ENCODE measurements at regions of chr2 and their contacts with region 1.

Region 1: GRCh38 chr2:218659258-218659987 is at the starts of genes BCS1L and ZNF142:
- DNase-seq: peak; percentile 75 to 95 (median 90)
- ATAC-seq: peak; percentile 99
- H3K4me3 ChIP-seq: peak within 1 kb of the TSS; percentile 83
- H3K4me3 Mint-ChIP-seq: peak within 1 kb of the TSS; percentile 90 to 99 (median 98)
- H3K27ac ChIP-seq: peak within 1 kb of the TSS; percentile 80
- H3K27ac Mint-ChIP-seq: peak within 1 kb of the TSS; percentile 74 to 96 (median 93)
- H3K4me1 ChIP-seq: peaks cover 7 to 15% of the 10 kb centered on the region in 2 donors
- H3K4me1 Mint-ChIP-seq: peaks cover 25 to 45% (median 38%) of the 10 kb centered on the region in 7 donors
- H3K27me3 ChIP-seq: no peaks in the 10 kb centered on the region
- H3K27me3 Mint-ChIP-seq: no peaks in the 10 kb centered on the region
- total RNA-seq, gene BCS1L: 21.4 to 62.0 (median 49.0) TPM
- total RNA-seq, gene ZNF142: 38.7 to 49.8 (median 40.8) TPM

Region 2: DNA sequence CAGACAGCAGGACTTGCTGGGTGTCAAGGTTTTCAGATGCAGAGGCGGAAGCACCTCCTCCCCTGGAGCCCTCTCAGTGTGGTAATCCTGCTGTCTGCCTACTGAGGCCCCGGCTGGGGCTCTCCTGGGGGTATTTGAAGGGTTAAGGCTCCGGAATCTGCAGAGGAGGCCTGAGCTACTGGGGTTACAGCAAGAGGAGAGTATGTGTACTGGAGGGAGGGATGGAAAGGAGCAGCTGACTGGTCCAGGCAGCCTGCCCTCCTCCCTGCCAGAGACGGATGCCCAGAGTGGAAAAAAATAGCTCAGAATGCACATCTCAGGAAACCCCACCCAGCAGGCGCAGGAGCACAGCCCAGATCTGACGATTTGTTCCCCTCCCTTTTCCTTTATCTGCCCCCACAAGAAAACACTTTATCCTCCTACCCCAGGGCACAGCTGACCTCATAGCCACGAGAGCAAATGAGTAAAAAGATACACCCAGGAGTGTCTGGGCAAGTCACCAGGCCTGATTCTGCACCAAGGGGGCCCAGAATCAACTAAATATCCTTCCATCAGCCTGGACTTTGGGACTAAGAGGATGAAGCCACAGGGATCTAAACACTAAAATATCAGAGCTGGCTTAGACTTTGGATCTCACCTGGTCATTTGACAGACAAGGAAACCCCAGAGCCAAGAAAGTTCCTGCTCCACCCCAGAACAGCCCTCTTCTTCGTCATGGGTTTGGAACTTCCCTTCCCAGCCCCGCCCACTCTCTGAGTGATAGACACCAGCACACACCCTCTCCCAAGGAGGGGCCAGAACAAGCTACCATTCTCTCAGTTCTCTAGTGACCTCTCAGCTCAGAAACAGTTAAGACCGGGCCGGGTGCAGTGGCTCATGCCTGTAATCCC is 372.6 kb before region 1 on chr2:
- CTCF ChIA-PET with region 1: no interaction called
- POLR2A ChIA-PET with region 1: no interaction called
- intact Hi-C with region 1: loop called (anchors 2 kb)
- DNase-seq: peak; percentile 53 to 90 (median 78)
- ATAC-seq: peak; percentile 87
- H3K4me3 ChIP-seq: peak overlapping the region; percentile 66
- H3K4me3 Mint-ChIP-seq: peak overlapping the region; percentile 85 to 97 (median 94)
- H3K27ac ChIP-seq: peak overlapping the region; percentile 93
- H3K27ac Mint-ChIP-seq: peak overlapping the region; percentile 95 to 99 (median 99)
- H3K4me1 ChIP-seq: peaks cover 74 to 77% of the 10 kb centered on the region in 2 donors
- H3K4me1 Mint-ChIP-seq: peaks cover 53 to 87% (median 76%) of the 10 kb centered on the region in 7 donors
- H3K27me3 ChIP-seq: no peaks in the 10 kb centered on the region
- H3K27me3 Mint-ChIP-seq: no peaks in the 10 kb centered on the region

Region 3: GRCh38 chr2:218671654-218672566 is 12.5 kb after region 1 on chr2 and contains the starts of genes RNF25 and STK36:
- CTCF ChIA-PET with region 1: interaction called, 11 read pairs
- POLR2A ChIA-PET with region 1: interaction called, 69 read pairs
- intact Hi-C with region 1: loop called (anchors 1 kb)
- DNase-seq: peak; percentile 60 to 86 (median 79)
- ATAC-seq: peak; percentile 96
- H3K4me3 ChIP-seq: peak within 1 kb of the TSS; percentile 81
- H3K4me3 Mint-ChIP-seq: peak within 1 kb of the TSS; percentile 88 to 100 (median 98)
- H3K27ac ChIP-seq: peak within 1 kb of the TSS; percentile 84
- H3K27ac Mint-ChIP-seq: peak within 1 kb of the TSS; percentile 90 to 98 (median 96)
- H3K4me1 ChIP-seq: peaks cover 9 to 15% of the 10 kb centered on the region in 2 donors
- H3K4me1 Mint-ChIP-seq: peaks cover 14 to 29% (median 24%) of the 10 kb centered on the region in 7 donors
- H3K27me3 ChIP-seq: no peaks in the 10 kb centered on the region
- H3K27me3 Mint-ChIP-seq: no peaks in the 10 kb centered on the region
- total RNA-seq, gene RNF25: 12.6 to 33.4 (median 28.3) TPM
- total RNA-seq, gene STK36: 18.9 to 28.1 (median 19.7) TPM

Region 4: GRCh38 chr2:218892693-218893348 is 233.4 kb after region 1 on chr2:
- CTCF ChIA-PET with region 1: interaction called, 3 read pairs
- POLR2A ChIA-PET with region 1: no interaction called
- intact Hi-C with region 1: loop called (anchors 2 to 5 kb)
- DNase-seq: peak; percentile 82 to 93 (median 91)
- ATAC-seq: peak; percentile 78
- H3K4me3 ChIP-seq: peak overlapping the region; percentile 48
- H3K4me3 Mint-ChIP-seq: peak overlapping the region; percentile 58 to 85 (median 75)
- H3K27ac ChIP-seq: peak overlapping the region; percentile 89
- H3K27ac Mint-ChIP-seq: peak overlapping the region; percentile 59 to 96 (median 89)
- H3K4me1 ChIP-seq: peaks cover 53 to 54% of the 10 kb centered on the region in 2 donors
- H3K4me1 Mint-ChIP-seq: peaks cover 38 to 56% (median 52%) of the 10 kb centered on the region in 7 donors
- H3K27me3 ChIP-seq: no peaks in the 10 kb centered on the region
- H3K27me3 Mint-ChIP-seq: peaks cover 0 to 76% (median 0%) of the 10 kb centered on the region in 5 donors

Region 5: DNA sequence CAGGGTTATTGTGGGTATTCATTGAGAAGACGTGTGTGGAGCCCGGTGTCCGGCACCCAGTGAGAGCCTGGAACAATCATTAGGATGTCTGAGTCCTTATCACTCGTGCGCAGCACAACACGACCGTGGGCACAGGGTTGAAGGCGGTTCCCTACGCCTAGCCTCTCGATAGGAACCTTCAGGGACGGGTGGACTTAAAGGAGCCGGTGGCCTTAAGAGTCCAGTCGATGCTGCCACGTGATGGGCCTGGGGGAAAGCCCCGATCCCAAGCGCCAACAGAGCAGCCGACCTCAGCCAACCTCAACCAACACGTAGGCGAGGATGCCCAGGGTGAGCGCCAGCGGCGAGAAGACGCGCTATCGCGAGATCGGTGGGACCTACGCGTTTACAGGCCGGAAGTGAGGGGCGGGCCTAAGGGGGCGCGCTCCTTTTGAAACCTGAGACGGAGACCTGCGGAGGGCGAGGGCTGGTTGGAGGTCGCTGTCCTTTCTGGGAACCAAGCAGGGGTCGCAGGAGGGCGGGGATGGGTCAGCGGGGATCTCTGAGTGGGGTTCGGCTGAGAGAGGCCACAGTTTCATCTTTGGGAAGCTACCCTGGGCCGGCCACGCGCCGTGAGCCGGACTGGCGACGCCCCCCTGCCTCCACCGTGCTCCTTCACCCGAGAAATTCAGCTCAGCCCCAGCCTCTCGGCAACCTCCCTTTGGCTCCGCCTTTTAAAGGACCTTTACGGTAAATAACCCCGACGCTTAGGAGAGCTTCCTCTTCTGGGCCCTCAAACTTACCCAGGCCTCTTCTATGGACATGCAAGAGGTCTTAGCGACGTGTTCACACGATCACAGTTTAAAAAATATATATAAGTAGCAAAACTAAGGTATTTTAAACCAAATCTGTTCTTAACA is 249.5 kb after region 1 on chr2:
- CTCF ChIA-PET with region 1: no interaction called
- POLR2A ChIA-PET with region 1: no interaction called
- intact Hi-C with region 1: loop called in 1 of 2 experiments (anchors 1 kb)
- DNase-seq: peak; percentile 78 to 89 (median 86)
- ATAC-seq: peak; percentile 98
- H3K4me3 ChIP-seq: peak overlapping the region; percentile 65
- H3K4me3 Mint-ChIP-seq: peak overlapping the region; percentile 82 to 94 (median 86)
- H3K27ac ChIP-seq: peak overlapping the region; percentile 53
- H3K27ac Mint-ChIP-seq: peak overlapping the region in 8 of 9 donors; percentile 10 to 88 (median 80)
- H3K4me1 ChIP-seq: peaks cover 10 to 12% of the 10 kb centered on the region in 2 donors
- H3K4me1 Mint-ChIP-seq: peaks cover 0 to 12% (median 6%) of the 10 kb centered on the region in 7 donors
- H3K27me3 ChIP-seq: no peaks in the 10 kb centered on the region
- H3K27me3 Mint-ChIP-seq: peaks cover 14 to 38% (median 16%) of the 10 kb centered on the region in 5 donors